ENCODE measurements at regions of chr20 and their contacts with region 1.

Region 1: DNA sequence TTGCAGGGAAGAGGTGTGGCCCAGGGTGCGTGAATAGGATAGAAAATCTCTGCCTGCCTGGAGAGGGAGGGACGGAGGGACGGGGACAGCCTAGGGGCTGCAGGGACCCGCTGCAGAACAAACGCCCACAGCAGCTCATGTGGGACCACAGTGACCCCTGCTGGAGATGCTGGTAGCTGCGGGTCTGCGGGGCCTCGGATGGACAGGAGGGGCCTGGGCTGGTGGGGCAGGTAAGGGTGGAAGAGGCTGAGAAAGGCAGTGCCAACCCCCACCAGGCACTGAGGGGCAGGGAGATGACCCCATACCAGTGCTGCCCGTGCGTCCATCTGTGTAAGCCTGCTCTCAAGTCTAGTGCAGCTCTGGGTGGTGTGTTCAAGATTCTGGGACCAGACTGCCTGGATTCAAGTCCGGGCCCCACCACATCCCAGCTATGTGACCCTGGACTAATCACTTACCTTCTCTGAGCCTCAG is 39.4 kb downstream of the KIAA1755 start:
- DNase-seq: peak; percentile 60 to 78 (median 73)
- ATAC-seq: peak; percentile 74
- H3K4me3 ChIP-seq: no peak overlapping the region
- H3K4me1 ChIP-seq: no peaks in the 10 kb centered on the region
- CTCF ChIP-seq: peak; percentile 69

Region 2: DNA sequence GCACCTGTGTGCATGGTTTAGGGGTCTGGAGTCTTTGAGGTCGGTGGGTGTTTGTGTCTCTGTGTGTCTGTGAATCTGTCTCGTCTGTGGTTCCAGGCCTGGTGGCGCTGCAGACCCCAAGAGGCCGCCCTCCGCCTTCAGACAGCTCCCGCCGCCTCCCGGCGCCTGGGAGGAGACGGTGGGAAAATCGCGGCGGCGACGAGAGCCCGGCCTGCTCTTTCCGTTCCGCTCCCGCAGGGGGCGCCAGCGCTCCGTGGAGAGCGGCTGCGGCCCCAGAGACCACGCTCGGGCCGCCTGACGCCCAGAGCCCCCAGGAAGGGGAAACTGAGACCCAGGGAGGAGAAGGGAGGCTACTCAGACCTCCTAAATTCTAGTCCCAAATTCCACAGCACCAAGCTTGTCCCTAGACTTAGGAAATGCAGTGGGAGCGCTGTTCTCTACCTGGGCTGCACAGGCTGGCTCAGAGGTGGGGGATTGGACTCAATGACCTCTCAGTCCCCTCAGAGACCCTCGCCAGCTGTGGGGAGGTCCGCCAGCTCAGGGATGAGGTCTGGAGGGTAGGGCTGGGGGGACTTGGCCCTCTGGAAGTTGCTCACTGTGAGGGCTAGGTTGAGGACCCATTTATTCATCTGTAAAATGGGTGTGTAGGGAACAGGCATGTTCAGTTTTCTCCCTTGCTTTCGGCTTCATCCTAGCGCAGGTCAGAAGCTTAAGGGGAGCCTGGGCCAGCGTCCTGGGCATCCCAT is 656.6 kb before region 1 on chr20:
- intact Hi-C with region 1: loop called in 1 of 2 experiments (anchors 5 kb)
- DNase-seq: peak in 2 of 3 donors; percentile 43 to 62
- ATAC-seq: peak; percentile 86
- H3K4me3 ChIP-seq: no peak overlapping the region
- H3K4me1 ChIP-seq: no peaks in the 10 kb centered on the region
- CTCF ChIP-seq: peak; percentile 72

Region 3: GRCh38 chr20:38057351-38057972 is 163.7 kb before region 1 on chr20:
- intact Hi-C with region 1: loop called (anchors 5 kb)
- DNase-seq: peak; percentile 73 to 97 (median 81)
- ATAC-seq: peak; percentile 88
- H3K4me3 ChIP-seq: no peak overlapping the region
- H3K4me1 ChIP-seq: no peaks in the 10 kb centered on the region
- CTCF ChIP-seq: peak; percentile 34

Region 4: GRCh38 chr20:38073307-38074071 is 147.7 kb before region 1 on chr20:
- intact Hi-C with region 1: loop called in 1 of 2 experiments (anchors 5 kb)
- DNase-seq: peak in 1 of 3 donors; percentile 79
- ATAC-seq: peak; percentile 85
- H3K4me3 ChIP-seq: no peak overlapping the region
- H3K4me1 ChIP-seq: no peaks in the 10 kb centered on the region
- CTCF ChIP-seq: peak; percentile 57

Region 5: DNA sequence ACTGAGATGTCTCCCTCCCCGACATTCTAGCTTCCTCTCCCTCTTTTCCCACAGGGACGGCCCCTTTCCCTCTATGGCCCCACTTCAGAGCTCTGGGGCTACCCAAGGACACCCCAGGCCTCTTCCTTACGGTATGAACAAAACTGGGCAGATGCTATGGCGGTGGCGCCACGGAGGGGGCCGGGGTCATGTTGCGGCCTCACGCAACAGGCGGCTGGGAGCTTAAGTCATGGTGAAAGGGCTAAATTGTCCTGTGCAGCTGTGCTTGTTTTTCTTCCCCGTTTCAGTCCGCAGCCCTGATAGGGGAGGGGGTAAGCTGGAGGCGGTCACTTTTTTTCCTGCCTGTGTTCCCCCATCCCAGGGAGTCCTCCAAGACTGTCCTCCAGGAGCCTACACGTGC is 57.0 kb after region 1 on chr20:
- intact Hi-C with region 1: no loop called
- DNase-seq: no peak
- ATAC-seq: no peak
- H3K4me3 ChIP-seq: no peak overlapping the region
- H3K4me1 ChIP-seq: no peaks in the 10 kb centered on the region
- CTCF ChIP-seq: no peak

Region 6: GRCh38 chr20:38315290-38315966 is 94.3 kb after region 1 on chr20:
- intact Hi-C with region 1: loop called in 1 of 2 experiments (anchors 10 kb)
- DNase-seq: no peak
- ATAC-seq: no peak
- H3K4me3 ChIP-seq: no peak overlapping the region
- H3K4me1 ChIP-seq: no peaks in the 10 kb centered on the region
- CTCF ChIP-seq: no peak

Region 7: GRCh38 chr20:38658879-38659596 is 437.9 kb after region 1 on chr20:
- intact Hi-C with region 1: no loop called
- DNase-seq: peak in 2 of 3 donors; percentile 21 to 32
- ATAC-seq: peak; percentile 72
- H3K4me3 ChIP-seq: no peak overlapping the region
- H3K4me1 ChIP-seq: no peaks in the 10 kb centered on the region
- CTCF ChIP-seq: peak; percentile 18

Measured in mucosa of descending colon (tissue), 3 donors.